Esophagus squamous epithelium (tissue), 5 donors: ENCODE measurements at regions of chr2 and their contacts with region 1.

Region 1: GRCh38 chr2:111116843-111117597 is 3.7 kb upstream of the BCL2L11 start:
- DNase-seq: no peak
- H3K4me3 ChIP-seq: peak overlapping the region; percentile 30 to 93 (median 84)
- H3K27ac ChIP-seq: peak overlapping the region in 3 of 4 donors; percentile 74 to 81 (median 81)
- H3K4me1 ChIP-seq: peaks cover 32 to 49% (median 33%) of the 10 kb centered on the region in 3 donors
- H3K27me3 ChIP-seq: peaks cover 0 to 86% (median 0%) of the 10 kb centered on the region in 4 donors
- CTCF ChIP-seq: peak; percentile 60 to 95 (median 82)
- POLR2A ChIP-seq: no peak

Region 2: GRCh38 chr2:110818767-110819481 is 298.1 kb before region 1 on chr2:
- intact Hi-C with region 1: loop called (anchors 10 kb)
- DNase-seq: no peak
- H3K4me3 ChIP-seq: no peak overlapping the region
- H3K27ac ChIP-seq: no peak overlapping the region
- H3K4me1 ChIP-seq: no peaks in the 10 kb centered on the region
- H3K27me3 ChIP-seq: peaks cover 0 to 13% (median 0%) of the 10 kb centered on the region in 4 donors
- CTCF ChIP-seq: no peak
- POLR2A ChIP-seq: no peak

Region 3: DNA sequence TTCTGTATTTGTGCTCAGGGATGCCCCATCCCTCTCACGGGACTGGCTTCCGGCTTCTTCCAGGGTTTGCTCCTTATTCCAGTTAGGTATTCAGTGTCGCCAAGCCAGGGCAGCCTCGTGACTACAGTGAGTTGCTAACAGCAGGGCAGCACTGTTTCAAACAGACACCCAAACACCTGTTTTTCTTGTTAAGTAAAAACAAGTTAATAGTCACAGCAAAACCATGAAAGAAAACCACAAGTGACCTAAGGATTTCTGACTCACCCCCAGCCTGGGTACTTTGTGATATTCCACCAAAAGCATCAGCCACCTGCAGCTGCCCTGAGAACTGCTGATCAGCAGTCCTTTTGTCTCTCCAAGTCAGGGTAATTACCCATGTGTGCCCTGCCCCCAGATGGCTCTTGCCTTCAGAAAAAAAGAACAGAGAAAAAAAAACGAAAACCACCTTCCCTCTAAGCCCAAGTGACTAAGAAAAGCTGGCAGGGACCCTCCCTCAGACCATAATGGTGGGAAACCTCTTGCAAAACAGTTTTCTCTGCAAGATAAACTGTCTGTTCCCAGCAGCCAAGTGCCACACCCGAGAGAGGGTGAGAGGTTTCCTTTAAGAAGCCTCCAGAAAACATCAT is 588.8 kb after region 1 on chr2:
- intact Hi-C with region 1: loop called (anchors 10 kb)
- DNase-seq: no peak
- H3K4me3 ChIP-seq: no peak overlapping the region
- H3K27ac ChIP-seq: peak overlapping the region; percentile 66 to 87 (median 85)
- H3K4me1 ChIP-seq: peaks cover 28 to 91% (median 41%) of the 10 kb centered on the region in 3 donors
- H3K27me3 ChIP-seq: no peaks in the 10 kb centered on the region
- CTCF ChIP-seq: no peak
- POLR2A ChIP-seq: no peak